ENCODE measurements at regions of chr22 and their contacts with region 1.

Region 1: DNA sequence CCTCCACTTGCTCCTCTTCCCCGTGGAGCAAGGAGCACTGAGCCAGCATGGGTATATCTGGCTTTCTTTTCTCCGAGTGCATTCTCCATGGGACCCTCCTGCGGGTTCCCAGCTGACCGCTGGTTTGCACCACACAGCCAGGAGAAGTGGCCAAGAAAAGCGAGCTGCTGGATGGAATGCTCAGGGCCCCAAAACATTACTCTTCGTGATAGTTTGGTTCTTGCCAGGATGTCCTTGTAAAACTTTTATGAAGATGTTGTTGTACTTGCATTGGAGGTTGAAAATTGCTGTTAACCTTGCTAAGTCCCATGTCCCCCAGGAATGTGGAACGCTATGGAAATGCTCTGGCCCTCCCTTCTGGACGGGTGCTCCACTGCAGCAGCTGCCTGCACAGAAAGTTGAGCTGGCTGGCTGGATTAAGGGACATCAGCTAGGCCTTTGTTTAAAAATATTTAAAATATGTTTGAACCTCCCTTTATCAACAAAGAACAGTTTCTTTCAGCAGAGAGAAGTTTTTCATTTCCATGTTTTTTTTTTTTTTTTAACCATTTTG is 68.7 kb downstream of the ZNRF3 start:
- DNase-seq: no peak
- ATAC-seq: peak in 7 of 8 donors; percentile 59 to 74 (median 62)
- H3K4me3 ChIP-seq: no peak overlapping the region
- H3K27ac ChIP-seq: no peak overlapping the region
- H3K4me1 ChIP-seq: peaks cover 0 to 20% (median 14%) of the 10 kb centered on the region in 9 donors
- H3K27me3 ChIP-seq: peaks cover 0 to 8% (median 0%) of the 10 kb centered on the region in 7 donors
- CTCF ChIP-seq: peak in 6 of 9 donors; percentile 13 to 48 (median 37)

Region 2: GRCh38 chr22:28855355-28856094 is 96.5 kb before region 1 on chr22:
- intact Hi-C with region 1: loop called in 2 of 10 experiments (anchors 10 kb)
- DNase-seq: peak in 1 of 2 donors; percentile 57
- ATAC-seq: peak in 7 of 8 donors; percentile 41 to 62 (median 54)
- H3K4me3 ChIP-seq: no peak overlapping the region
- H3K27ac ChIP-seq: no peak overlapping the region
- H3K4me1 ChIP-seq: peaks cover 0 to 7% (median 0%) of the 10 kb centered on the region in 9 donors
- H3K27me3 ChIP-seq: no peaks in the 10 kb centered on the region
- CTCF ChIP-seq: peak; percentile 84 to 94 (median 91)

Region 3: GRCh38 chr22:29004647-29005371 is 52.8 kb after region 1 on chr22:
- intact Hi-C with region 1: no loop called
- DNase-seq: peak; percentile 20 to 42
- ATAC-seq: peak; percentile 57 to 84 (median 79)
- H3K4me3 ChIP-seq: peak overlapping the region in 6 of 10 donors; percentile 9 to 31 (median 18)
- H3K27ac ChIP-seq: peak overlapping the region in 7 of 10 donors; percentile 25 to 65 (median 49)
- H3K4me1 ChIP-seq: peaks cover 0 to 40% (median 27%) of the 10 kb centered on the region in 9 donors
- H3K27me3 ChIP-seq: peaks cover 0 to 8% (median 0%) of the 10 kb centered on the region in 7 donors
- CTCF ChIP-seq: no peak

Measured in heart right ventricle (tissue), 16 donors.